Activated T-helper 1 cell treated with anti-CD3 and anti-CD28 coated beads, Interleukin-12 subunit alpha, Interleukin-12 subunit beta, Interleukin-2, Interleukin-4 antibody, amounts not matched to agents 30 ng/mL and 10 ng/mL and 1 ng/mL, durations not matched to agents 14 hours and 24 hours and 36 hours (primary cell): ENCODE measurements at regions of chr13 and their contacts with region 1.

Region 1: GRCh38 chr13:29362849-29363604 is 232.5 kb downstream of the SLC7A1 start:
- DNase-seq: no peak
- H3K4me3 Mint-ChIP-seq: no peak overlapping the region
- H3K27ac Mint-ChIP-seq: no peak overlapping the region
- H3K4me1 Mint-ChIP-seq: no peaks in the 10 kb centered on the region
- H3K27me3 Mint-ChIP-seq: no peaks in the 10 kb centered on the region

Region 2: DNA sequence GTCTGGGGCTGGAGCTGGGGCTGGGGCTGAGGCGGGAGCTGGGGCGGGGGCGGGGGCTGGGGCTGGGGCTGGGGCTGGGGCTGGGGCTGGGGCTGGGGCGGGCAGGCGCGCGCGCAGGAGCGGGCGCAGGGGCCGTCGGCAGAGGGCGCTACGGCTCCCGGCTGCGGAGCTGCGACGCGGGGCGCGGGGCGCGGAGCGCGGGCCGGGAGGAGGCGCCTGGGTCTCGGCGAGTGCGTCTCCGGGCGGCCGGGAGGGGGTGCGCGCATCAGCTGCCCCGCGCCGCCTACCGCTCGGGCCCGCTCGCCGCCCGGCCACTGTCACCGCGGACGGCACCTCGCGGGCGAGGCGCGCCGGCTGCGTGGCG is 543.3 kb before region 1 on chr13:
- intact Hi-C with region 1: loop called (anchors 5 kb)
- DNase-seq: peak; percentile 24
- H3K4me3 Mint-ChIP-seq: no peak overlapping the region
- H3K27ac Mint-ChIP-seq: no peak overlapping the region
- H3K4me1 Mint-ChIP-seq: peaks cover 5% of the 10 kb centered on the region
- H3K27me3 Mint-ChIP-seq: peaks cover 47% of the 10 kb centered on the region

Region 3: GRCh38 chr13:29081036-29081435 is 282.0 kb before region 1 on chr13:
- intact Hi-C with region 1: loop called (anchors 2 kb)
- DNase-seq: no peak
- H3K4me3 Mint-ChIP-seq: no peak overlapping the region
- H3K27ac Mint-ChIP-seq: no peak overlapping the region
- H3K4me1 Mint-ChIP-seq: peaks cover 6% of the 10 kb centered on the region
- H3K27me3 Mint-ChIP-seq: no peaks in the 10 kb centered on the region

Region 4: DNA sequence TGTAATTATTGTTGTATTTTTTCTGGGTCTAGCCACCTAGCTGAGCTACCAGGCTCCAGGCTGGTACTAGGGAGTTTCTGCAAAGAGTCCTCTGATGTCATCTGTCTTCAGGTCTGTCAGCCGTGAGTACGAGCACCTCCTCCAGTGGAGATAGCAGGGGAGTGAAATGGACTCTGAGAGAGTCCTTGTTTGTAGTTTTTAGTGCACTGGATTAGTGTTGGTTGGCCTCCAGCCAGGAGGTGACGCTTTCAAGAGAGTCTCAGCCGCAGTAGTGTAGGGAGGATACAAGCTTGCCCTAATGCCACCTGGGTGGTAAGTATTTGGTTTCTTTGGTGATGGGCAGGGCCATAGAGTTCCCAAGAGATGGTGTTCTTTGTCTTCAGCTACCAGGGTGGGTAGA is 152.4 kb before region 1 on chr13:
- intact Hi-C with region 1: no loop called
- DNase-seq: no peak
- H3K4me3 Mint-ChIP-seq: no peak overlapping the region
- H3K27ac Mint-ChIP-seq: no peak overlapping the region
- H3K4me1 Mint-ChIP-seq: no peaks in the 10 kb centered on the region
- H3K27me3 Mint-ChIP-seq: no peaks in the 10 kb centered on the region